ENCODE measurements at regions of chr1 and their contacts with region 1.

Region 1: GRCh38 chr1:20493839-20494608 is 8.0 kb upstream of the CAMK2N1 start:
- H3K4me3 ChIP-seq: no peak overlapping the region
- H3K27ac ChIP-seq: no peak overlapping the region
- H3K4me1 ChIP-seq: no peaks in the 10 kb centered on the region
- CTCF ChIP-seq: peak; percentile 95

Region 2: GRCh38 chr1:20207419-20207959 is 286.5 kb before region 1 on chr1:
- CTCF ChIA-PET with region 1: interaction called, 42 read pairs
- POLR2A ChIA-PET with region 1: no interaction called
- H3K4me3 ChIP-seq: no peak overlapping the region
- H3K27ac ChIP-seq: no peak overlapping the region
- H3K4me1 ChIP-seq: no peaks in the 10 kb centered on the region
- CTCF ChIP-seq: no peak

Region 3: DNA sequence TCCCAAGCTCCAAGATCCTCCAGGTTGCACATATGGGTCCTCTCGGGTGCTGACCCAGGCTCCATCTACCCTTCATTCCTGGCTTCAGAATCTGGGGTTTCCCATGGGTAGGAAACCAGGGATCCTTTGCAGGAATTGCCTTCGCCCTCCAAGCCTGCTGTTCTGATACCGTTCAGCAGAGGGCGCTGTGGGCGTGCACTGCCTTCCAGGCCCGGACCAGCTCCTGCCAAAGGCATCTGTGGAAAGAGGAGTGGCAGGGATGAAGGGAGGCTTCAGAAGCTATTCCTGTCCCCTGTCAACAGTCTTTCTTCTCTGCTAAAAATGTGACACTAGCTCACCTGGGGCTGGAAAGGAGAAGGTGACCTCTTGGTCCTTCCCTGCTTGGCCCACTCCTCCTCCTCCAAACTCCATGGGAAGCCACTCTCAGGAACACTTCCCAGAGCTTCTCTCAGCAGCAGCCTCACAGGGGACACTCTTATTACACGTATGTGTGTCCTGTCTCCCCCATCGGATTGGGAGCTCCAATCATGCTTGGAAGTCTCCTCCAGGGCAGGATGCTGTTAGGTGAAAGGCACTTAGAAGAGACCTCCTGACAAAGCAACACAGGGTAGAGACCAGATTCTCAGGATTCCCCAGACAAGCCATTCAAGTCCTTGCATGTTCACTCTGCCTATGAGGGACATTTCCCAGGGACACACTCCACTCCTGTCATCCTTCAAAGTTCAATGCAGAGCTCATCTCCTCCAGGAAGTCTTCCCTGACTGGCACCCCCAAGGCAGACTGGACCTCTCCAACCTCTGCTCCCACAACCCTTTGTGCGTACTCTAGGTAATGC is 132.0 kb before region 1 on chr1:
- CTCF ChIA-PET with region 1: interaction called, 75 read pairs
- POLR2A ChIA-PET with region 1: interaction called, 3 read pairs
- H3K4me3 ChIP-seq: no peak overlapping the region
- H3K27ac ChIP-seq: no peak overlapping the region
- H3K4me1 ChIP-seq: peaks cover 14% of the 10 kb centered on the region
- CTCF ChIP-seq: peak; percentile 69

Region 4: GRCh38 chr1:20466273-20466672 is 27.8 kb before region 1 on chr1:
- CTCF ChIA-PET with region 1: interaction called, 12 read pairs
- POLR2A ChIA-PET with region 1: no interaction called
- H3K4me3 ChIP-seq: no peak overlapping the region
- H3K27ac ChIP-seq: no peak overlapping the region
- H3K4me1 ChIP-seq: no peaks in the 10 kb centered on the region
- CTCF ChIP-seq: no peak